Adrenal gland (tissue), 19 donors: ENCODE measurements at regions of chr16 and their contacts with region 1.

Region 1: GRCh38 chr16:3027945-3028712 is 4.3 kb downstream of the THOC6 start:
- DNase-seq: peak; percentile 84 to 92 (median 89)
- H3K4me3 ChIP-seq: peak overlapping the region in 1 of 4 donors; percentile 12
- H3K27ac ChIP-seq: no peak overlapping the region
- H3K4me1 ChIP-seq: peaks cover 4 to 29% of the 10 kb centered on the region in 2 donors
- H3K27me3 ChIP-seq: peaks cover 21% of the 10 kb centered on the region
- CTCF ChIP-seq: peak; percentile 53 to 80 (median 71)
- POLR2A ChIP-seq: peak in 1 of 2 donors; percentile 22

Region 2: DNA sequence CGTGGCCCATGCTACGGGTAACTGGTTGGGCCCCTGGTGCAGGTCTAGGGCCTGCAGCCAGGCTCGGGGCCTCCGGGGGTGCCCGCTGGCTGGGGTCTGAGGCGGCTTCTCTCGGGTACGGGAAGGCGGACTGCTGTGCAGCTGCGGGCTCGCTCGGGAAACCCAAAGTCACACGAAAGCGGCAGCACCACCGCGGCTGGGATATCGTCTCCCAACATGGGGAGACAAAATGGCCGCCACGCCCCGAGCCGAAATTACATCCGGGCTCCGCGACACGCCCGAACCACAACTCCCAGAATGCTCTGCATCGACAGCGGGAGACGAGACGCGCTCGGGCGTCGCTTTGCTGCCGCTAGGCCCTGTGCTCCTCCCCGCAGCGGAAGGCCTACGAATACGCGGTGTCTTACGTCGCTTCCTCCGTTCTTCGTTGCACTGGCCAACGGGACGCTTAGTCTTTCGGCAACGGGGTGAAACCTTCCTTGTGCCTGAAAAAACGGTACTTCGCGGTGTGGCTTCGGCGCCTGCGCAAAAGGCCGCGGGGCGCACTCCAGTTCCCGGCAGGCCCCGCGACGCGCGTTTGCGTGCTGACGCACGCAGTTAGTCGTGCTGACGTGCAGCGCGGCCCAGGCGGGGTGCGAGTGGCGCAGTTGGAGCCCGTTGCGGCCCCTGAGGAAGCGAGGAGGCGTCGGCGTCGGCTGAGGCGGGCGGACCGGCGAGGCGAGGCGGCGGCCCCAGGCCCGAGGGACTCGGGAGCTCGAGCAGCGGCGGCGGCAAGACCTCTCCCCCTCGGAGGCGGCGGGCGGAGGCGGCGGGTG is 275.9 kb before region 1 on chr16 and contains the start of gene SRRM2:
- intact Hi-C with region 1: no loop called
- DNase-seq: peak; percentile 94 to 98 (median 95)
- H3K4me3 ChIP-seq: peak within 1 kb of the TSS; percentile 65 to 86 (median 76)
- H3K27ac ChIP-seq: peak within 1 kb of the TSS; percentile 94 to 99 (median 99)
- H3K4me1 ChIP-seq: peaks cover 30 to 38% of the 10 kb centered on the region in 2 donors
- H3K27me3 ChIP-seq: no peaks in the 10 kb centered on the region
- CTCF ChIP-seq: peak in 1 of 6 experiments; percentile 23
- POLR2A ChIP-seq: peak; percentile 98 to 99
- total RNA-seq, gene SRRM2: 81.7 to 848 (median 294) TPM

Region 3: GRCh38 chr16:2996298-2996697 is 31.8 kb before region 1 on chr16:
- intact Hi-C with region 1: loop called in 1 of 2 experiments (anchors 5 kb)
- DNase-seq: no peak
- H3K4me3 ChIP-seq: no peak overlapping the region
- H3K27ac ChIP-seq: no peak overlapping the region
- H3K4me1 ChIP-seq: no peaks in the 10 kb centered on the region
- H3K27me3 ChIP-seq: no peaks in the 10 kb centered on the region
- CTCF ChIP-seq: no peak
- POLR2A ChIP-seq: no peak

Region 4: GRCh38 chr16:3003582-3004302 is 24.4 kb before region 1 on chr16:
- intact Hi-C with region 1: loop called (anchors 2 to 5 kb)
- DNase-seq: peak; percentile 98 to 99 (median 99)
- H3K4me3 ChIP-seq: peak overlapping the region in 1 of 4 donors; percentile 16
- H3K27ac ChIP-seq: peak overlapping the region in 1 of 5 donors; percentile 71
- H3K4me1 ChIP-seq: peaks cover 0 to 4% of the 10 kb centered on the region in 2 donors
- H3K27me3 ChIP-seq: peaks cover 6% of the 10 kb centered on the region
- CTCF ChIP-seq: peak in 5 of 6 experiments; percentile 31 to 56 (median 53)
- POLR2A ChIP-seq: peak in 1 of 2 donors; percentile 4

Region 5: DNA sequence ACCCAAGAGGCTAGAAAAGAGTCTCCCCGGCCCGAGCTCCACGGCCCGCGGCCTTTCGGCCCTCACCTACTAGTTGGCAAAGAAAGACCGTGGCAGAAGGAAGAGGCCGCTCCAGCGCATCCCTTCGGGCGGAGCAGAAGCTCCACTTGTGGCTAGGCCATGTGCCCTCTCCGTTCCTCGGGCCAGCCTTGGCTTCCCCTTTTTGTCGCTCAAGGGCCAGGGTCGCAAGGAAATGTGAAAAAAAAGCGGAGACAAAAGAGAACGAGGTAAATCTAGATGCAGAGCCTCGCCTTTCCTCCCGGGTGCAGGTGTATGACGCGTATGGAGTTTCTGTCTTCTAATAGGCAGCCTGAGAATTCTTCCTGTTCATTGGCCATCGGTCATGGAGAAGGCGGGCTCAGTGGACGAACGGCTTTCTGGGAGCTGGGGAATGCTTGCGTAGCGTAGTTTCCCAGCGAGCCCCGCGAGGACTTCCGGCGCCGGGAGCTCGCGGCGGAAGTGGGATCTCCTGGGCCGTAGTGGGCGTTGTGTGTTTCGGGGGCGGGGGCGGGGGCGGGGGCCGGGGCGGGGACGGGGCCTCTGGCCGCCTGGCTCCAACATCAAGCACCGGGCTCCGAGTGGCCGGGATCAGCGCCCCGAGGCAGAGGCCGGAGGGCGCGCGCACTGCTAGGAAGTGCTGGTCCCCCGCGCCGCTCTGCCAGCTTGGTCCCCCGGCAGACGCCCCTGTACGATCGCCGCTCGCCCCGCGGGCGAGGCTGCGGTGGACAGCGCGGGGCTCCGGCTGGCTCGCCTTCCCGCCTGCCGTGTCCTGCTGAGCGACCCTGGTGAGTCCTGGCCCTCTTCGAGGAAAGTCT is 106.7 kb after region 1 on chr16 and contains the start of gene ZNF213:
- intact Hi-C with region 1: no loop called
- DNase-seq: peak; percentile 94 to 99 (median 97)
- H3K4me3 ChIP-seq: peak within 1 kb of the TSS; percentile 67 to 96 (median 76)
- H3K27ac ChIP-seq: peak within 1 kb of the TSS; percentile 85 to 97 (median 96)
- H3K4me1 ChIP-seq: peaks cover 6 to 24% of the 10 kb centered on the region in 2 donors
- H3K27me3 ChIP-seq: no peaks in the 10 kb centered on the region
- CTCF ChIP-seq: peak in 2 of 6 experiments; percentile 1 to 15
- POLR2A ChIP-seq: peak; percentile 76 to 88
- total RNA-seq, gene ZNF213: 2.6 to 19.3 (median 12.6) TPM

Region 6: GRCh38 chr16:3173892-3174617 is 145.9 kb after region 1 on chr16:
- intact Hi-C with region 1: no loop called
- DNase-seq: no peak
- H3K4me3 ChIP-seq: no peak overlapping the region
- H3K27ac ChIP-seq: no peak overlapping the region
- H3K4me1 ChIP-seq: peaks cover 0 to 6% of the 10 kb centered on the region in 2 donors
- H3K27me3 ChIP-seq: peaks cover 86% of the 10 kb centered on the region
- CTCF ChIP-seq: no peak
- POLR2A ChIP-seq: no peak